ENCODE measurements at regions of chr1 and their contacts with region 1.

Region 1: DNA sequence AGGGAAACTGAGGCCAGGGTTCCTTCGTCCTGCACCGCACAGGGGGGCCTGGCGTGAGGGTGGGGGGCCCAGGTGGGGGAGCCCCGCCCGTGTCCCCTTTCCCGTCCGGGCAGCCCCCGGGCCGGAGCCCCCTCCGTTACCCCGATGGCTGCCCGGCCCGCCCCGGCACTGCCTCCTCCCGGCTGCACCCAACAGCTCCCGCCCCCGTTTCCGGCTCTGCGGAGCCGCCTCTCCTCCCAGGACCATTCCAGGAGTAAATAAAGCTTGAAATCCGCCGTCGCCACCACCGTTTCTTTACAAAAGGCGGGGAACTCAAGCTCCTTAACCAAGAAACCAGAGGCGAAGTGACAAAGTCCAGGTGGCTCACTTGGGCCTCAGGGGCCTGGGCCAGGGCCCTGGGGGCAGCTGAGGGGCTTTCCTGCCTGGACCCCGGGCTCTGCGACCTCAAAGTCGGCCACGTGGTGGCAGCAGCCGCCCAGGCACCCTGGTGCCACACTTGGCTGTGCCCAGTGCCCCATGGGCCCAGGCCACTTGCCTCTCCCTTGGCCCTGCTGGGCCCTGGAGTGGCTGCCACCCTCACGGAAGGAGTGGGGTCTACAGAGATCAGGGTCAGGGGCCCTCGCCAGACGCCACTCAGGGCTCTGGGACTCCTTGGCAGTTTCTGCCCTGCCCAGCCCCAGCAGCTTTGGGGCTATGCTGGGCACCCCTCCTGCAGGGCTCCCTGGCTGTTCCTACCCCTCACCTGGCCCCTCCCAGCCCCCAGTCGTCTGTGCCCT is 514 bp upstream of the FAAP20 start:
- DNase-seq: peak; percentile 93
- H3K4me3 ChIP-seq: peak overlapping the region; percentile 49
- CTCF ChIP-seq: peak; percentile 88

Region 2: DNA sequence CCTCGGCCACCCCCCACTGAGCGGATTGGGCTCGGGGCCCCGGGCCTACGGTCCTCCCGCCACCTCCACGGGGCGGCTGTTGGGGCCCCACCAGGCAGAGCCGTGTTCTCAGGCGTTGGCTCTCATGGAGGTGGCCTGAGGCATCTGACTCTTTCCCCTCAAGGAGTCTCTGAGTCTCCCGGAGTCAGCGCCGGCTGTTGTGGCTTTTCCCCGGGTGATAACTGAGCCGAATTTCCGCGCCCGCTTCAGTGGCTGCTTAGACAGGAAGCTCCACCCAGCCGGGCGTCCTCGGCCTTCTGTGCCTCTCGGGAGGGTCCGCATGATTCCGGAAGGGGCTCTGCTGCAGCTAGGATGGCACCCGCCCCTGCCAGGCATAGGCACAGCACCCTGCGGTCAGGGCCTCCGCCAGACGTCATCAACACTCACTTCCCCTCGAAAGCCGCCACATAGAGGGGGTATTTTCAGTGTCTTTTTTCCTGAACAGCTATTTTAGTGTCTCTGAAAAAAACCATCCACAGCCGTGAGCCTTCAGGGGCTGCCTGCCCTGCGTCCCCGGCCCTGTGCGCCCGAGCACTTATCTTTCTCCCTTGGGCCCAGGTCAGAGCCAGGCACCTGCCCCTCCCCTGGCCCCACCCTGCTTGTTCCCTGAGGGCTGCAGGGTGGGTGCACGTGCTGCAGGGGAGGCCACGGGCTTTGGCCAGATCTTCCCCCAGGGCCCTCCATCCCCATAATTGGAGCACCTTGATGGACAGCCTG is 105.9 kb after region 1 on chr1:
- in situ Hi-C with region 1: no loop called
- DNase-seq: no peak
- H3K4me3 ChIP-seq: no peak overlapping the region
- CTCF ChIP-seq: no peak

Region 3: DNA sequence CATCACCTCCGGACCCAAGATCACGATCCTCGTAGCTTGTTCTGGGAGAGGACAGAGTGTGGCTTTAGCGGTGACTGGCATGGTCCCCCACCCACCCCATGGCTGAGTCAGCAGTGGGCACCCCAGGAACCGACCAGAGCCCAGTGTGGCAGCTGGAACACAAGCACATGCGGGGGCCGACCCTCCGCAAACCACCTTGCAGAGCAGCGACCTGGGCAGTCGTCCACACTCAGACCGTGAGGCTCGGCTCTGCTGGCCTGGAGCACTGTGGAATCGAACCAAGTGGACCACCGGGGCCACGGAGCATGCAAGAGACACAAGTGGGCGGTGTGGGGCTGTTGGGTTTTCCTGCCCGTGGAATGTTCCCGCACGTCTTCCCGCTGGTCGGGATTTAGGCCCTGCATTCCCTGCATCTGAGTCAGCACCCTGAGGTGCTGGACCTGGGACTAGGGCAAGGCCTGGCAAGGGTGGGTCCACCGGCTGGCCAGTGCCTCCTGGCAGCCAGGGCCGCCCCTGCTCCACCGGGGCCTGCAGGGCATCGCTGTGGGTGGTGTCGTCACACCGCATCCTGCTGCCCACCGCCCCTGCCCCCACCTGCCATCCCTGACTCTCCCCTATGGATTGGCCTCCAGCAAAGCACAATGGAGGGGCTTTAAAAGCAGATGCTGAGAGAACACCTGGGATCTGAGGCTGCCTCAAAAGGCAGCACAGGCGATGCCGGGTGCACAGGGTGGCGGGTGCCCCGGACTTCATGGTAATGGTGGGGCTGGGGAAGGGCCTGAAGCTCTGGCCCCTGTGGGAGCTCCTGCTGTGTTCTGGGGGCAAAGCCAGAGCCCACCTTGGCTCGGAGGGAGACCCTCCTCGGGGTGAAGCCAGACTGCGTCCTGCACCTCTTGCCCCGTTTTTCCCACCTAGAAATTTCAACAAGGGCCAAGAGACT is 177.7 kb after region 1 on chr1:
- in situ Hi-C with region 1: loop called (anchors 10 kb)
- DNase-seq: no peak
- H3K4me3 ChIP-seq: no peak overlapping the region
- CTCF ChIP-seq: no peak

Measured in astrocyte of the spinal cord (primary cell).